Activated naive CD4-positive, alpha-beta T cell treated with anti-CD3 and anti-CD28 coated beads for 36 hours (primary cell): ENCODE measurements at regions of chr3 and their contacts with region 1.

Region 1: GRCh38 chr3:141959921-141960554 is 83.6 kb downstream of the ATP1B3 start:
- DNase-seq: no peak
- H3K4me3 Mint-ChIP-seq: no peak overlapping the region
- H3K27ac Mint-ChIP-seq: no peak overlapping the region
- H3K4me1 Mint-ChIP-seq: peaks cover 3% of the 10 kb centered on the region
- H3K27me3 Mint-ChIP-seq: no peaks in the 10 kb centered on the region

Region 2: DNA sequence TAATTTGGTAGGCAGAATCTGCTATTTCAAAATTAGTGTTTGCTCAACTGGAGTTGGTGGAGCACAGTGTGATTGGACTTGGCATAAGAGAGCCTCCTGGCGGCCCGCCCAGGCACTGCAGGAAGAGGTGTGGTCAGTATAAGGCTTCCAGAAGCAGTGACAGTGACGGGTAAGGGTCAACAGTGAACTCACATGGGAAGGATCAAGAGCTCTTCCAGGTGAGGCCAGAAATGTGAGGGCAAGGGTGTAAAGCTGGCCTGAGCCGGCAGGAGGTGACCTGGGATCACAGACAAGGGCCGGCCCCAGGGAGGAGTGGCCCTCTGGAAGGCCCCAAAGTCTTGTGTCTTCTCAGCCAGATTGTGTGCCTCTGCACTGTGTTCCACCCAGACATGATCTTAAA is 315.1 kb before region 1 on chr3:
- CTCF ChIA-PET with region 1: no interaction called
- intact Hi-C with region 1: no loop called
- DNase-seq: peak; percentile 86
- H3K4me3 Mint-ChIP-seq: no peak overlapping the region
- H3K27ac Mint-ChIP-seq: no peak overlapping the region
- H3K4me1 Mint-ChIP-seq: peaks cover 3% of the 10 kb centered on the region
- H3K27me3 Mint-ChIP-seq: no peaks in the 10 kb centered on the region

Region 3: DNA sequence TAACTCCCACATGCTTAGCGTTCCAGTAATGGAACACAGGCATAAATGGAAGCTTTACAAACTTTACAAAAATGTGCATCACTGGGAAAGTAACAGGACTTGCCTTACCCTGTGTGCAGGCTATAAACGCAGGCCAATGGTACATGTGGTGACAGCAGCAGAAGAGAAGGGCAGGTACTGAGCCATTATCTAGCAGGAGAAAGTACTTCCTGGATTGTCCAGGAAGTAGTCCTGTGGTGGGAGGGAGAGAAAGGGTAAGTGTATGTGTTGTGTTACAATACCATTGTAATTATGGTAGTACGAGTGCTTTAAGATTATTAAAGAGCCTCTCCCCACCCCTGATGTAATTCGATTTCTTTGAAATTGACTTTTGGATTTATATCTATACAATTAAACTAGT is 78.3 kb before region 1 on chr3:
- CTCF ChIA-PET with region 1: no interaction called
- intact Hi-C with region 1: no loop called
- DNase-seq: no peak
- H3K4me3 Mint-ChIP-seq: no peak overlapping the region
- H3K27ac Mint-ChIP-seq: no peak overlapping the region
- H3K4me1 Mint-ChIP-seq: peaks cover 57% of the 10 kb centered on the region
- H3K27me3 Mint-ChIP-seq: no peaks in the 10 kb centered on the region

Region 4: GRCh38 chr3:142211035-142211434 is 251.0 kb after region 1 on chr3:
- CTCF ChIA-PET with region 1: interaction called, 4 read pairs
- intact Hi-C with region 1: loop called (anchors 10 kb)
- DNase-seq: peak; percentile 29
- H3K4me3 Mint-ChIP-seq: no peak overlapping the region
- H3K27ac Mint-ChIP-seq: no peak overlapping the region
- H3K4me1 Mint-ChIP-seq: no peaks in the 10 kb centered on the region
- H3K27me3 Mint-ChIP-seq: no peaks in the 10 kb centered on the region

Region 5: DNA sequence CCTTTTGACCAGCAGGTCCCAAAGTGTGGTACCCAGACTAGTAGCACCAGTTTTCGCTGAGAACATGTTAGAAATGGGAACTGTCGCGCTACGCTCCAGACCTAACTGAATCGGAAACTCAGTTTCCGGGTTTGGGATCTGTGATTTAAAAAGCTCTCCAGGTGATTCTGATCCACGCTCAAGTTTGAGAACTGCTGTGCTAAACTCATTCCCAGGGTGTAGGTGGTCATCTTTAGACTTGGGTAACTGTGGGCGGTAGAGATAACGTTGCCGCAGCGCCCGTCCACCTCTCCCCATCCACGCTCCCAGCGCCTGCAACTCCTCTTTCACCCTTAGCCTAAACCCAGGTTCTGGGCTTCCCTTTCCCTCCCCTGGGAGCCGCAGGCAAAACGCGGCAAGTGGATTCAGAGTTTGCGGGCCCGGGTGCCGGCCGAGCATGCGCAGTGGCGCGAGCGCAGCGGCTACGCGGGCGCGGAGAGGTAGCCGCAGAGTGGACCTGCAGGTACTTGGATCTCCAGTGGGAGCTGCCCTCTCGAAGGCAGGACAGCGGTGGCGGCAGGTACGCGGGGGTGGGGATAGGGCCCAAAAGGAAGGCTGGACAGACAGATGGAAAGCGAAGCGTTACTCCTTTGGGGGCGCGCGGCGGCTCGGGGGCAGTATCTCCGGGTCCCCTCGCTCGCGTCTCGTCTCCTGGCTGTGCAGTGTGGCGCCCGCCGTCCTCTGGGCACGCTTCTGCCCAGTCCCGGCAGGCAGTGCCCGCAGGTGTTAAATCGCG is 636.1 kb after region 1 on chr3 and contains the start of gene PLS1:
- CTCF ChIA-PET with region 1: no interaction called
- intact Hi-C with region 1: no loop called
- DNase-seq: peak; percentile 83
- H3K4me3 Mint-ChIP-seq: peak within 1 kb of the TSS; percentile 94
- H3K27ac Mint-ChIP-seq: peak within 1 kb of the TSS; percentile 66
- H3K4me1 Mint-ChIP-seq: peaks cover 14% of the 10 kb centered on the region
- H3K27me3 Mint-ChIP-seq: no peaks in the 10 kb centered on the region
- total RNA-seq, gene PLS1: 5.3 to 5.4 TPM